ENCODE measurements at regions of chr1 and their contacts with region 1.

Region 1: DNA sequence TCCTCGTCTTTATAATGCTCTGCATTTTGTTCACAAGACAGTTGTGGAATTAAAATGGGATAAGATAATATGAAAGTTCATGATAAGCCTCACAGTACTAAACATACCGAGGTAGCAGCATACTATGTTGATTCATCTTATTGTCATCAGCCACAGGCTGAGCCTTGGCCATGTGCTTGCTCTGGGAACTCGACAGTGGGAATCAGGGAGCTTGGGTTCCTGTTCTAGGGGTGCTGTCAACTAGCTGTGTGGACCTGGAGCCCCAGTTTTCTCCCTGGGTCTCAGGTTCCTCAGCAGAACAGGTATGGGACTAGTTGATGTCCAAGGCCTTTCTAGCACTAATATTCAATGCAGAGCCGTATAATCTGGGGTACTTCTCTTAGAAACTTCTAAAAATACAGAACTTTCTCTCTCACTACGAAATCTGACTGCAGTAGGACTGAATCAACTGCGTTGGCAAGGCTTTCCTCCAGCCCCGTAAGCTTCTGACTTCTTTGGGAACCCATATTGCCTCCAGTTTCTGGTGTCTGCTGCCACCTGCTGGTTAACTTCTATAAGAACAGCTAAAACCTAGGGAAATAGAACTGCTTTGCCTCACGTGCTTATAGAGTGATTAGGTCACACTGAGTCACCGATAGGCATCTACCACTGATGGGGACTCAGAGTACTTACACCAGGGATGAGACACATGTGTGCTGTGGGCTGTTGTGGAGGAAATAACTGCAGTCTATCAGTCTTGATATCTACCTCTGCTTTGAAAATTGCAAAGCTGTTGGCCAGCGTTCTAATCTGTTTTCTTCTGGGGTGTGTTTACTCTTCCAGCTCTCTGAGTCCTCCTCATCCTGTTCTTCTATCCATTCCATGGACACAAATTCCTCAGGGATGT is 110.9 kb downstream of the RGL1 start:
- DNase-seq: peak in 8 of 10 donors; percentile 35 to 92 (median 75)

Region 2: GRCh38 chr1:183635606-183636333 is 280.1 kb before region 1 on chr1 and contains the start of gene ARPC5:
- intact Hi-C with region 1: loop called (anchors 5 kb)
- DNase-seq: peak; percentile 96 to 100 (median 98)

Region 3: GRCh38 chr1:183655562-183656075 is 260.2 kb before region 1 on chr1:
- intact Hi-C with region 1: loop called (anchors 1 kb)
- DNase-seq: peak; percentile 59 to 96 (median 87)

Region 4: GRCh38 chr1:183958958-183959357 is 43.1 kb after region 1 on chr1:
- intact Hi-C with region 1: no loop called
- DNase-seq: no peak

Region 5: DNA sequence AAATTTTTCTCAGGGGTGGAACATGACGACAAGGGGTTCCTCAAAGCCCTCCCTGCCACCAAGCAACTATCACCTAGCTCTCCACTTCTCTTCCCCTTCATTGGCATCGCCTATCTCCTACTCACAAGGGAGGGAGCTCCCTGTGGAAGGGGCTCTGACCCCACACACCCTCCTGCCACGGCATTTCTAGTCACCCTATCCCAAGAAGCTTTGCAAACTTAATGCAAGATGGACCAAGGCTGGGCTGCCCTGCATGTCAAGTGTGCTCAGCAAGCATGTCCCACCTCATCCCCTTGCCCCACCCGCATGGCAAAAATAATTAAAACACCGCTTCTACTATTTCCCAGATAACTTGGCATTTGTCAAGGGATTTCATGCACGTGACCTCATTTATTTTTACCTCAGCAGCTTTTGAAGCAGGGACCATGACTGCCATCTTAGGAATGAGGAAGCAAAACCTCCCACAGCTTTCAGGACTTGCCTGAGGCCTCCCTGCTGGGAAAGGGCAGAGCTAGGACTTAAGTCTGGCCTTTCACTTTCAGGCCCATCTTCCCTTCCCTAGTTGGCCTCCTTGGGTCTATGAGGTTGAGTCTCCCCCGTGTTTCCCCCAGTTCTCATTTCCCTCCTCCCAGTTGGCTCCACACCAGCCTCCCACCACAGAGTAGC is 296.9 kb after region 1 on chr1:
- intact Hi-C with region 1: no loop called
- DNase-seq: no peak